MCF 10A (cell line): ENCODE measurements at regions of chr9 and their contacts with region 1.

Region 1: GRCh38 chr9:112819635-112820496 is 69.3 kb downstream of the SNX30 start:
- DNase-seq: peak; percentile 67
- H3K4me3 Mint-ChIP-seq: no peak overlapping the region
- H3K27ac Mint-ChIP-seq: no peak overlapping the region
- H3K4me1 Mint-ChIP-seq: peaks cover 8% of the 10 kb centered on the region
- H3K27me3 Mint-ChIP-seq: no peaks in the 10 kb centered on the region
- CTCF ChIP-seq: peak; percentile 64

Region 2: GRCh38 chr9:112086627-112087026 is 733.2 kb before region 1 on chr9:
- CTCF ChIA-PET with region 1: interaction called, 8 read pairs
- POLR2A ChIA-PET with region 1: no interaction called
- intact Hi-C with region 1: loop called (anchors 10 kb)
- DNase-seq: peak; percentile 39
- H3K4me3 Mint-ChIP-seq: no peak overlapping the region
- H3K27ac Mint-ChIP-seq: peak overlapping the region; percentile 65
- H3K4me1 Mint-ChIP-seq: peaks cover 6% of the 10 kb centered on the region
- H3K27me3 Mint-ChIP-seq: no peaks in the 10 kb centered on the region
- CTCF ChIP-seq: peak; percentile 62

Region 3: GRCh38 chr9:112443200-112443599 is 376.7 kb before region 1 on chr9:
- CTCF ChIA-PET with region 1: interaction called, 10 read pairs
- POLR2A ChIA-PET with region 1: interaction called, 3 read pairs
- intact Hi-C with region 1: loop called (anchors 10 kb)
- DNase-seq: peak; percentile 24
- H3K4me3 Mint-ChIP-seq: no peak overlapping the region
- H3K27ac Mint-ChIP-seq: no peak overlapping the region
- H3K4me1 Mint-ChIP-seq: peaks cover 14% of the 10 kb centered on the region
- H3K27me3 Mint-ChIP-seq: no peaks in the 10 kb centered on the region
- CTCF ChIP-seq: peak; percentile 29

Region 4: GRCh38 chr9:112717661-112718341 is 102.1 kb before region 1 on chr9 and contains the start of gene INIP:
- CTCF ChIA-PET with region 1: interaction called, 17 read pairs
- POLR2A ChIA-PET with region 1: interaction called, 9 read pairs
- intact Hi-C with region 1: no loop called
- DNase-seq: peak; percentile 97
- H3K4me3 Mint-ChIP-seq: peak within 1 kb of the TSS; percentile 100
- H3K27ac Mint-ChIP-seq: peak within 1 kb of the TSS; percentile 98
- H3K4me1 Mint-ChIP-seq: peaks cover 8% of the 10 kb centered on the region
- H3K27me3 Mint-ChIP-seq: no peaks in the 10 kb centered on the region
- CTCF ChIP-seq: peak; percentile 6
- total RNA-seq, gene INIP: 28.0 and 33.5 TPM in 2 replicates

Region 5: DNA sequence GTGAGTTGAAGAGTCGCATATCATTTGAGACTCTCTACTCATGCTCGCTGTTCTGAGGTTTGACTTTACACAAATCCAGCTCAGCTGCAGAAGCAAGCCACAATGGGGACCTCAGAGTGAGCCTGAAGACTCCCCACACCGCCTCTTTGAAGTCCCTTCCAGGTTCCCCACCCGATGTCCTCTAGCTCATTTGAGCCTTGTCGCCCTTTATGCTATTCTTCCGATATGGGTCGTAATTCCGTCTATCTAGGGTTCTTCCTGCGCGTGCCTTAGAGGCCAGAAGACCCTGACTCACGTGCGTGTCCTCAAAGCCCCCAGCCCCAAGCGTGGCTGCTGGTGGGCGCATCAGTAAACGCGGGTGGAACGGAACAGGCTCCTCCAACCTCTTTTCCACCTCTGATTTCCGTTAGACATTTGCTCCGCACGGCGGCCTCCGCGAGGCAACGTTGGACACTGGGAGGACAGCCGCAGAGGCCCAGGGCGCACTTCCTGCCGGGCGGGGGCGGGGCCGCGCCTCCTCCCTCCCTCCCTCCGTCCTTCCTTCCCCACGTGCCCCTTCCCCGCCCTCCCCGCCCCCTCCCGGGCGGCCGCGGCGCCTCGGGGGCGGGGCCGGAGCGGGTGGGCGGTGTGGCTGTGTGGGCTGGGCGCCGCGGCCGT is 69.6 kb before region 1 on chr9 and contains the start of gene SNX30:
- CTCF ChIA-PET with region 1: interaction called, 11 read pairs
- POLR2A ChIA-PET with region 1: interaction called, 11 read pairs
- intact Hi-C with region 1: loop called (anchors 2 kb)
- DNase-seq: peak; percentile 90
- H3K4me3 Mint-ChIP-seq: peak within 1 kb of the TSS; percentile 98
- H3K27ac Mint-ChIP-seq: peak within 1 kb of the TSS; percentile 98
- H3K4me1 Mint-ChIP-seq: peaks cover 23% of the 10 kb centered on the region
- H3K27me3 Mint-ChIP-seq: no peaks in the 10 kb centered on the region
- CTCF ChIP-seq: no peak
- total RNA-seq, gene SNX30: 9.0 and 9.6 TPM in 2 replicates